ENCODE measurements at regions of chr21 and their contacts with region 1.

Region 1: GRCh38 chr21:32597205-32597604 is 11.9 kb upstream of the TCP10L start:
- DNase-seq: no peak
- ATAC-seq: no peak
- H3K4me3 ChIP-seq: no peak overlapping the region
- H3K4me3 Mint-ChIP-seq: no peak overlapping the region
- H3K27ac ChIP-seq: no peak overlapping the region
- H3K27ac Mint-ChIP-seq: peak overlapping the region; percentile 24
- H3K4me1 ChIP-seq: no peaks in the 10 kb centered on the region
- H3K4me1 Mint-ChIP-seq: no peaks in the 10 kb centered on the region
- H3K27me3 ChIP-seq: no peaks in the 10 kb centered on the region
- H3K27me3 Mint-ChIP-seq: no peaks in the 10 kb centered on the region
- CTCF ChIP-seq: no peak

Region 2: GRCh38 chr21:31786164-31786920 is 810.9 kb before region 1 on chr21:
- CTCF ChIA-PET with region 1: interaction called, 8 read pairs
- POLR2A ChIA-PET with region 1: no interaction called
- intact Hi-C with region 1: loop called in 1 of 2 experiments (anchors 2 kb)
- DNase-seq: no peak
- ATAC-seq: no peak
- H3K4me3 ChIP-seq: no peak overlapping the region
- H3K4me3 Mint-ChIP-seq: no peak overlapping the region
- H3K27ac ChIP-seq: no peak overlapping the region
- H3K27ac Mint-ChIP-seq: no peak overlapping the region
- H3K4me1 ChIP-seq: no peaks in the 10 kb centered on the region
- H3K4me1 Mint-ChIP-seq: peaks cover 5% of the 10 kb centered on the region
- H3K27me3 ChIP-seq: no peaks in the 10 kb centered on the region
- H3K27me3 Mint-ChIP-seq: peaks cover 10% of the 10 kb centered on the region
- CTCF ChIP-seq: peak; percentile 8

Region 3: DNA sequence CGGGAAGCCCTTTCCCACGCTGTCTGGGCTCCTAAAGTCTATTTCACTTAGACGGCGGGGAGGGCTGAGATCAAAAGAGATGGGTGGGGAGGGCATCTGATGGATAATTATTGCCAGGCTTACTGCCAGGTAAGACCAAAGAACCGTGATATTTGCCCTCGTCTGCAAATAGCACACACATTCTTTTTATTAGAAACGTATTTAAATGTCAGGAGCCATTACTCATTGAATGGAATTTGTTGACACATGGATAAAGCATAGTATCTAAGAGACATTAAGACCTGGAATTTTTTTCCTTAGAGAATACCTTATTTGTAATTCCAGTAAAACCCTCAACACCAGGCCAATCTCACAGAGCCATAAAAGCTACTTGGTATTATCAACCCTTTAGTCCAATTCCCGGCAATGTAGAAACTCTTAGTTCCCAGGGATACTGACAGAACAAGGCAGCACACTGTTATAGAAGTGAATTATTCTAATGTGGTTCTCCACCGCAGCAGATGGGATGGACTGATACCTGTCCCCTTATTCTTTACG is 215.0 kb before region 1 on chr21:
- CTCF ChIA-PET with region 1: interaction called, 11 read pairs
- POLR2A ChIA-PET with region 1: no interaction called
- intact Hi-C with region 1: no loop called
- DNase-seq: peak in 1 of 9 experiments; percentile 43
- ATAC-seq: no peak
- H3K4me3 ChIP-seq: no peak overlapping the region
- H3K4me3 Mint-ChIP-seq: no peak overlapping the region
- H3K27ac ChIP-seq: no peak overlapping the region
- H3K27ac Mint-ChIP-seq: no peak overlapping the region
- H3K4me1 ChIP-seq: no peaks in the 10 kb centered on the region
- H3K4me1 Mint-ChIP-seq: peaks cover 10% of the 10 kb centered on the region
- H3K27me3 ChIP-seq: no peaks in the 10 kb centered on the region
- H3K27me3 Mint-ChIP-seq: no peaks in the 10 kb centered on the region
- CTCF ChIP-seq: no peak

Region 4: GRCh38 chr21:32412162-32413014 is 184.8 kb before region 1 on chr21 and contains the start of gene EVA1C:
- CTCF ChIA-PET with region 1: interaction called, 30 read pairs
- POLR2A ChIA-PET with region 1: no interaction called
- intact Hi-C with region 1: no loop called
- DNase-seq: peak; percentile 51 to 90 (median 76)
- ATAC-seq: peak; percentile 71
- H3K4me3 ChIP-seq: peak within 1 kb of the TSS; percentile 63 to 96
- H3K4me3 Mint-ChIP-seq: peak within 1 kb of the TSS; percentile 95
- H3K27ac ChIP-seq: peak within 1 kb of the TSS; percentile 86 to 93
- H3K27ac Mint-ChIP-seq: peak within 1 kb of the TSS; percentile 96
- H3K4me1 ChIP-seq: peaks cover 35% of the 10 kb centered on the region
- H3K4me1 Mint-ChIP-seq: peaks cover 48% of the 10 kb centered on the region
- H3K27me3 ChIP-seq: no peaks in the 10 kb centered on the region
- H3K27me3 Mint-ChIP-seq: no peaks in the 10 kb centered on the region
- CTCF ChIP-seq: peak; percentile 23
- total RNA-seq, gene EVA1C: 6.9 to 10.3 TPM

Region 5: DNA sequence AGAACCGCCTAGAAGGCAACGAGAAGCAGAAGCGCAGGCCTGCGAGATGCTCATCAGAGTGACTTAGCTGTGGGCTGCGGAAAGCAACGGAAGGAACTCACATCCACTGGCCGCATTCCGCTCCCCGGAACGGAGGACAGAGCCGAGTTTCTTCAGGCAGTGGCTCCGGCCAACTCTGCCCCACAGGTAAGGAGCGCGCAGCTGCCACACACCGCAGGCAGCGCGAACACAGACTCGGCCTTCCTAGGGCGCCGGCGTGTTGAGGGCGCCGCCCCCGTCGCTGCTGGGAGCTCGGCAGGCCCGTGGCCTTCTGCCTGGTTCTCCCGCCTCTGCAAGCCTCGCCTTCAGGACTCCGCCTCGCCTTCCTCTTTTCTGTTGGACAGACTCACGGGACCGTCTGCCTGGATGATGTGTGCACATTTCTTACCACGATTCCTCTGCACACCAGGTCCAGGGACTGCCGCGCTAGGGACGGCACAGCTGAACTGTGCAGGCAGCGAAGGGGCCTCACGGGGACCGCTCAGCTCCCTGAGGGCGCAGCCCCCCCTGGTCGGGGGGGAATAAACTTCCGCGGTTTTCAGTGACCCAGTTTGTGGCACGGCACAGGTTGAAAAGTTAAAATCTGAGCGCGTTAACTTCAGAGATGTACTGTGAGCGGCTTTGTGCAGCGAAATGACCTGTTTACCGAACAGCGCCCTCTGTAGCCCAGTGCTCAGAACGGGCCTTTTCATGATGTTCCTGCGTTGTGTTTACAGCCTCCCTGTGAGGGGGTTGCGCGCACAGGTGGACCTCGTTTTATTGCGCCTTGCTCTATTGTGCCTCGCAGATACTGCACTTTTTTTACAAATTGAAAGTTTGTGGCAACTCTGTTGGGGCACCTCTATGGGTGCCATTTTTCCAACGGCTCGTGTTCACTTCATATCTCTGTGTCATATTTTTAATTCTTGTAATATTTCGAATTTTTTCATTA is 27.7 kb before region 1 on chr21:
- CTCF ChIA-PET with region 1: interaction called, 22 read pairs
- POLR2A ChIA-PET with region 1: interaction called, 6 read pairs
- intact Hi-C with region 1: loop called in 1 of 2 experiments (anchors 1 kb)
- DNase-seq: peak; percentile 67 to 93 (median 84)
- ATAC-seq: peak; percentile 88
- H3K4me3 ChIP-seq: peak overlapping the region; percentile 64 to 78
- H3K4me3 Mint-ChIP-seq: peak overlapping the region; percentile 90
- H3K27ac ChIP-seq: peak overlapping the region; percentile 46 to 63
- H3K27ac Mint-ChIP-seq: peak overlapping the region; percentile 91
- H3K4me1 ChIP-seq: peaks cover 18% of the 10 kb centered on the region
- H3K4me1 Mint-ChIP-seq: peaks cover 25% of the 10 kb centered on the region
- H3K27me3 ChIP-seq: no peaks in the 10 kb centered on the region
- H3K27me3 Mint-ChIP-seq: no peaks in the 10 kb centered on the region
- CTCF ChIP-seq: peak; percentile 97

Measured in CD8-positive, alpha-beta T cell (primary cell).